HEK293 (cell line): ENCODE measurements at regions of chr10 and their contacts with region 1.

Region 1: GRCh38 chr10:110137142-110137545 is 70.3 kb upstream of the MXI1 start:
- H3K4me3 ChIP-seq: no peak overlapping the region
- H3K27ac ChIP-seq: no peak overlapping the region
- H3K4me1 ChIP-seq: no peaks in the 10 kb centered on the region
- CTCF ChIP-seq: peak; percentile 76

Region 2: GRCh38 chr10:109883859-109884771 is 253.0 kb before region 1 on chr10:
- CTCF ChIA-PET with region 1: interaction called, 12 read pairs
- POLR2A ChIA-PET with region 1: no interaction called
- H3K4me3 ChIP-seq: no peak overlapping the region
- H3K27ac ChIP-seq: no peak overlapping the region; the same call in 1 of the 2 replicates
- H3K4me1 ChIP-seq: peaks cover 3% of the 10 kb centered on the region; the same call in 1 of the 2 replicates
- CTCF ChIP-seq: peak; percentile 94

Region 3: DNA sequence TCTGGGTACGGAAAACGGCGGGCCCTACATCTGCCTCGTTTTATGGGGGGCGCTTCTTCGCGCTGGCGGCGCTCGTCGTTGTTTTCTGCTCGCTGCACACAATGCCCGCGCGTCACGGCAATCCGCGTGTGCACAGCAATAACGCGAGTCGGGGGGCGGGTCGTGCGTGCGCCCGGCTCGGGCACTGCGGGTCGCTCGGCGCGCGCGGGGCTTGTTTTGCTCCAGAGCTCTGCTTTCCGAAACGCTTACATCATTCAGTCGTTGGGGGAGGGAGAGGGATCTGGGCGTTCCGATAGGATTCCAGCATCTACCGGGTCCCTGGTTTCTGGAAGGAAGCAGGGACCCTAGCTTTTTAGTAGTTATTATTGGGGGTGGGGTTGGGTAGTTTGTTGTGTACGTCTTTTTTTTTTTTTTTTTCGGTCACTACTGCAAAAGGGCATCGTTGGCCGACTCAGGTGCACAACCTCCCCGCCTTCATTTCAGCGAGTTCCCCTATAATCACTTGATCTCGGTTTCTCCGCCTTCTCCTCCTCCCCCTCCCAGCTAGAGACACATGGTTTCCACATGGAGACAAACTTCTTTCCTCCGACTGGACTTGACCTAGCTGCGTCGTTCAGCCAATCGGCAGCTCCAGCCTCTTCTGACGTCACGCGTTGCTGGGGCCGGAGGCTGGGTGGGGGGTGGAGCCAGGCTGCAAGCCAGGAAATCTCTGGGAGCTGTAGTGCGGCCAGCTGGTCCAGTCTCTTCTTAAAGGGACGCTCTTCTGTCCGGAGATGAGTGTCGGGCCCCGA is 73.7 kb after region 1 on chr10:
- CTCF ChIA-PET with region 1: interaction called, 23 read pairs
- POLR2A ChIA-PET with region 1: interaction called, 3 read pairs
- H3K4me3 ChIP-seq: peak overlapping the region; percentile 68
- H3K27ac ChIP-seq: peak overlapping the region; percentile 93
- H3K4me1 ChIP-seq: peaks cover 20% of the 10 kb centered on the region
- CTCF ChIP-seq: peak; percentile 67

Region 4: DNA sequence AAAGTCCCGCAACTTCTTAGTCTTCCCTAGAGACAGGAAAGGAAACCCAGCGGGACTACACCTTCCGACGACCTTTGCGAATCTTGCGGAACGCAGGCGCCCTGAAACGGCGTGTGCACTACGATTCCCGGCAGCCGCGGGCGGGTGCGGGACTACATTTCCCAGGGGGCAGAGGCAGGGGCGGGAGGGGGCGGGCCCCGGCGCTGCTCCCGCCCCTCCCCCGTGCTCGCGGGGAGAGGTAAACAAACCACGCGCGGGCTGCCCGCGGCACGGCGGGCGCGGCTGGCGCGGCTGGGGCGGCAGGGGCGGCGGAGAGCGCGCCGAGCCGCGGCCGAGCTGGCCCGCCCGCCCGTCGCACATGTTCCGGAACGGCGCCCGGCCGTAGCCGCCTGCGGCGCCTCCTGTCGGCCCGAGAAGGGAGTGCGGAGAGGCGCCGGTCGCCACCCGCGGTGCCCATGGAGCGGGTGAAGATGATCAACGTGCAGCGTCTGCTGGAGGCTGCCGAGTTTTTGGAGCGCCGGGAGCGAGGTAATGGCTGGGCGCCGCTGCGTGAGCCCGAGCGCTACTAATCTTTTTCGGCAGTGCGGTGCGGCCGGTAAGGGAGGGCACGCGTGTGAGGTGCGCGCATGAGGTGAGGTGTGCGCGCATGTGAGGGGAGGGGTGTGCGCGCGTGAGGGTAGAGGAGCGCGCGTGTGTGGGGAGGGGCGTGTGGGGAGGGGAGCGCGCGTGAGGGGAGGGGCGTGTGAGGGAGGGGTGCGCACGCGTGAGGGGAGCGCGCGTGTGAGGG is 88.8 kb after region 1 on chr10:
- CTCF ChIA-PET with region 1: interaction called, 47 read pairs
- POLR2A ChIA-PET with region 1: no interaction called
- H3K4me3 ChIP-seq: peak overlapping the region; percentile 85
- H3K27ac ChIP-seq: peak overlapping the region; percentile 90
- H3K4me1 ChIP-seq: peaks cover 7% of the 10 kb centered on the region
- CTCF ChIP-seq: peak; percentile 76

Region 5: GRCh38 chr10:110273474-110273873 is 136.3 kb after region 1 on chr10:
- CTCF ChIA-PET with region 1: interaction called, 119 read pairs
- POLR2A ChIA-PET with region 1: no interaction called
- H3K4me3 ChIP-seq: no peak overlapping the region
- H3K27ac ChIP-seq: no peak overlapping the region
- H3K4me1 ChIP-seq: peaks cover 38% of the 10 kb centered on the region
- CTCF ChIP-seq: no peak

Region 6: DNA sequence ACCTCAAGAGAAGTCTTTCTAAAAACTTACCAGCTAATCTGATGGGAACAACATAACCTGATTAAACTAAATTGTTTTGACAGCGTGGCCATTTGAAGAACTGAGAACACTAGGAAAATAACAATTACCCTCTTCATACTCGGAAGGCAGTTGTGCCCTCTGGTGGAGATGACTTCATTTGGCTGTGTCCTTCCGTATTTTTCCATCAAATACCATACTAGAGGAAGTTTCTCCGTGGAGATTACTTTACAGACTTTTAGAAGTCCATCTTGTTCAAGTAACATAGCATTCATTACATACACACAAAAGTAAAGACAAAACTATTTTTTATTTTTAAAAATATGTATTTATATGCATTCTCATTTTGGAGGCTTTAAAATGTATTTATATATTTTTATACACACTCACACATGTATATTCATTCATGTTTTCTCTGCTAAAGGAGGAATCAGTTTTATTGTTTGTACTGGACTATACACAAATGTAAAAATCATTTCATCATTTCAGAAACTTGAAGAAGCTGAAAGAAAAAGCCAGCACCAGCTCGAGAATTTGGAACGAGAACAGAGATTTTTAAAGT is 142.4 kb after region 1 on chr10:
- CTCF ChIA-PET with region 1: interaction called, 119 read pairs
- POLR2A ChIA-PET with region 1: no interaction called
- H3K4me3 ChIP-seq: no peak overlapping the region
- H3K27ac ChIP-seq: no peak overlapping the region
- H3K4me1 ChIP-seq: peaks cover 11% of the 10 kb centered on the region
- CTCF ChIP-seq: peak; percentile 65; the same call in 1 of the 2 replicates